Heart left ventricle (tissue), 16 donors: ENCODE measurements at regions of chr6 and their contacts with region 1.

Region 1: GRCh38 chr6:54043360-54043759 is 67.9 kb upstream of the MLIP start:
- DNase-seq: no peak
- ATAC-seq: peak in 2 of 4 donors; percentile 33
- H3K4me3 ChIP-seq: no peak overlapping the region
- H3K27ac ChIP-seq: no peak overlapping the region
- H3K4me1 ChIP-seq: peaks cover 0 to 63% (median 12%) of the 10 kb centered on the region in 12 donors
- H3K27me3 ChIP-seq: no peaks in the 10 kb centered on the region
- CTCF ChIP-seq: no peak
- POLR2A ChIP-seq: no peak

Region 2: GRCh38 chr6:53786832-53787231 is 256.5 kb before region 1 on chr6:
- intact Hi-C with region 1: no loop called
- DNase-seq: no peak
- ATAC-seq: no peak
- H3K4me3 ChIP-seq: no peak overlapping the region
- H3K27ac ChIP-seq: no peak overlapping the region
- H3K4me1 ChIP-seq: no peaks in the 10 kb centered on the region
- H3K27me3 ChIP-seq: peaks cover 0 to 3% (median 0%) of the 10 kb centered on the region in 9 donors
- CTCF ChIP-seq: no peak
- POLR2A ChIP-seq: no peak

Region 3: DNA sequence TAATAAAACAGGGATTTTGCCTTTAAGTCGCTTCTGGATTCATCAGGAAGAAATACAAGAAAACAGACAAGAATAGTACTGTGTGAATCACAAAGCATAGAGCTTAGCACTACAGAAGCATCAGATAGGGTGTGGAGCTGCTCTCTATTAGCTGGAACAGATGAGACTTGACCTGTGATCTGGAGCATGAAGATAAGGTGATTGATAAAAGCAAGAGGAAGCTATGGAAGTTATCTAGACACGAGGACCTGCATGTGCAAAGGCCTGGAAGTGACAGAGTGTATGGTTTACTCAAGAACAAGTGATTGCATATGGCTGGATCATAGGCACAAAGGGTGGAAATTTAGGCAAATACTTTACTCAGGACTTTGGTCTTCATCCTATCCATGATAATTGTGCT is 45.1 kb before region 1 on chr6:
- intact Hi-C with region 1: no loop called
- DNase-seq: no peak
- ATAC-seq: peak in 1 of 4 donors; percentile 17
- H3K4me3 ChIP-seq: no peak overlapping the region
- H3K27ac ChIP-seq: peak overlapping the region in 1 of 12 donors; percentile 15
- H3K4me1 ChIP-seq: peaks cover 0 to 23% (median 1%) of the 10 kb centered on the region in 12 donors
- H3K27me3 ChIP-seq: no peaks in the 10 kb centered on the region
- CTCF ChIP-seq: no peak
- POLR2A ChIP-seq: no peak

Region 4: DNA sequence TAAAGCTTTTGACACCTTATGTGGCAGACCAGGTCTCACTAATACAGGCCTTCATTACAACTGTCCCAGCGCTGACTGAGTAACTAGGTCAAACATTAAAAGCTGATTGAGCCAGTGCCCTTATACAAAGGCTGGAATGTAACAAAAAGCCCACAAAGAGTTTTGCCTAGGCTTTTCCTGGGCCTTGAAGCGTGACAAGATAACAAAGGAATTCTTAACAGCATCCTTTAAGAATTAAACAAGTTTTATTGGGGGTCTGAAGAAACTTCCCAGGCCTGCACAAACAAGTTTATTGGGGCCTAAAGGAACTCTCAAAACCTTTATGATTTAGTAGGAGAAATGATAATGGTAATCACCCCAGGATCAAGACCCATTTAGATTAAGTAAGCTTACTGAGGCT is 535.7 kb after region 1 on chr6:
- intact Hi-C with region 1: loop called in 1 of 10 experiments (anchors 10 kb)
- DNase-seq: no peak
- ATAC-seq: no peak
- H3K4me3 ChIP-seq: no peak overlapping the region
- H3K27ac ChIP-seq: no peak overlapping the region
- H3K4me1 ChIP-seq: no peaks in the 10 kb centered on the region
- H3K27me3 ChIP-seq: no peaks in the 10 kb centered on the region
- CTCF ChIP-seq: no peak
- POLR2A ChIP-seq: no peak